Activated T-helper 1 cell treated with anti-CD3 and anti-CD28 coated beads, Interleukin-12 subunit alpha, Interleukin-12 subunit beta, Interleukin-2, Interleukin-4 antibody, amounts not matched to agents 30 ng/mL and 10 ng/mL and 1 ng/mL, durations not matched to agents 14 hours and 24 hours and 36 hours (primary cell): ENCODE measurements at regions of chr19 and their contacts with region 1.

Region 1: GRCh38 chr19:58326914-58327726 is at the start of gene ZSCAN22:
- DNase-seq: peak; percentile 88
- H3K4me3 Mint-ChIP-seq: no peak within 1 kb of the TSS
- H3K27ac Mint-ChIP-seq: no peak within 1 kb of the TSS
- H3K4me1 Mint-ChIP-seq: peaks cover 9% of the 10 kb centered on the region
- H3K27me3 Mint-ChIP-seq: no peaks in the 10 kb centered on the region
- total RNA-seq, gene ZSCAN22: 4.7 and 4.8 TPM in 2 replicates

Region 2: DNA sequence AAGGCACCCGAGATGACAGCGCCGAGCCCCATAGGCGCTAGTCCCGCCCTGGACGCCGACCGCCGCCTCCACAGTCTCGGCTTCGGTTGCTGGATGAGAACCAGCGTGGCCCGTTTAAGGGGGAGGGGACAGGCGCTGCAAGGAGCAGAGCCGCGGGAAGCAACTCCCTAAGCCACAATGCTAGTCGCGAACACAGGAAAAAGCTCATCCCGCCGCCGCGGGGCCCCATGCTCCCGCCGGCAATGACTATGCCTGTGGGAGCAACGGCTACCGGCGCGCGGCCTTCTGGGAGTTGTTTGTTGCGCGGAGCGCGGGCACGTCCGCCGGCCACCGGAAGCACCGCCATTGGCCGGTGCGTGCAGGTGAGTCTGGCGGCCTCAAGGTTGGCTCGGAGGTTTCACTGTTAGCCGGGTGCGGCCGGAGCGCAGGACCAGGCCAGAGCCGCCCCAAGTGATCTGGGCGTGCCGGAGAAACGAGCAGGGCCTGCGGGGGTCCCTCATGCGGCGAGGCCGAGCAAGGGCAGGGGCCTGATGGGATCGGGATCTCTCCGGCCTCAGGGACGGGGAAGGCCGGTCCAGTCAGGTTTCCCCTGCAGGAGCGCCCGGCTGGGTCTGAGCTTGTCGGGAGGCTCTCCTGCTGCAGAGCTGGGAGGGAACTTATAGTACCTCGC is 98.4 kb before region 1 on chr19 and contains the start of gene ZNF544:
- intact Hi-C with region 1: loop called (anchors 5 kb)
- DNase-seq: peak; percentile 60
- H3K4me3 Mint-ChIP-seq: peak within 1 kb of the TSS; percentile 89
- H3K27ac Mint-ChIP-seq: peak within 1 kb of the TSS; percentile 96
- H3K4me1 Mint-ChIP-seq: peaks cover 32% of the 10 kb centered on the region
- H3K27me3 Mint-ChIP-seq: no peaks in the 10 kb centered on the region
- total RNA-seq, gene ZNF544: 51.8 and 56.1 TPM in 2 replicates

Region 3: DNA sequence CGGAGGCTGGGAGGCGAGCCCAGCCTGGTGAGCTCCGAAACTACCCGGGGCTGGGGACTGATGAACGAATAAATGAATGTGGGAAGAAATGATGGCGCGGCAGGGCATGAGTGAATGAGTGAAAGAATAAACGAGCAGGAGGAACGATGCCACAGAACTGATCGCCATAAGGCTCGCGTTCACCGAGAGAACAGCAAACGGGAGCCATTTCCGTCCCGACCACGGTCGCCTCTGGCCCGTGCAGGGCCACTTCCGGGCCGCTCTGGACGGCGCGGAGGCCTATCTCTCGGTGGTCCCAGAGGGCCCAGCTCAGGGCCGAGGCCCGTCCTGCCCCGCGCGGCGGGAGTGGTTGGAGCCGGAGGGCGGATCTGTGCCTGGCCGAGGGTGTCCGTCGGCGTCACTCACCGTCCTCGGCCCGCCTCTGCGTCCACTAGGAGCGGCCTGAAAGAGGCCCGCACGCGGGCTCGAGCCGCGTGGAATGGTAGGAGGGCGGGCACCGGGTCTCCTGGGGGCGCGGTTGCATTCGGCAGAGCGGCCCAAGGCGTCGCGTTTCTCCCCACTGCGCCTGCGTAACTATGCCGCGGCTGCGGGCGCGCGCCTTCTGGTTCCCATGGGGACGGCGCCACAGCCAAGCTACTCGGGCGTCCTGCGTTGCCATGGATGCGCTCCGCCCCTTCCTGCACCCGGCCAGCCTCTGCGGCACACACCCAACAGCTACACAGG is 35.3 kb after region 1 on chr19 and contains the start of gene ZNF497:
- intact Hi-C with region 1: loop called (anchors 1 kb)
- DNase-seq: peak; percentile 95
- H3K4me3 Mint-ChIP-seq: peak within 1 kb of the TSS; percentile 94
- H3K27ac Mint-ChIP-seq: peak within 1 kb of the TSS; percentile 95
- H3K4me1 Mint-ChIP-seq: peaks cover 7% of the 10 kb centered on the region
- H3K27me3 Mint-ChIP-seq: no peaks in the 10 kb centered on the region
- total RNA-seq, gene ZNF497: 0.76 and 0.93 TPM in 2 replicates

Region 4: GRCh38 chr19:58400916-58401839 is 74.1 kb after region 1 on chr19:
- intact Hi-C with region 1: loop called (anchors 1 kb)
- DNase-seq: peak; percentile 99
- H3K4me3 Mint-ChIP-seq: peak overlapping the region; percentile 86
- H3K27ac Mint-ChIP-seq: peak overlapping the region; percentile 88
- H3K4me1 Mint-ChIP-seq: peaks cover 24% of the 10 kb centered on the region
- H3K27me3 Mint-ChIP-seq: peaks cover 5% of the 10 kb centered on the region

Region 5: DNA sequence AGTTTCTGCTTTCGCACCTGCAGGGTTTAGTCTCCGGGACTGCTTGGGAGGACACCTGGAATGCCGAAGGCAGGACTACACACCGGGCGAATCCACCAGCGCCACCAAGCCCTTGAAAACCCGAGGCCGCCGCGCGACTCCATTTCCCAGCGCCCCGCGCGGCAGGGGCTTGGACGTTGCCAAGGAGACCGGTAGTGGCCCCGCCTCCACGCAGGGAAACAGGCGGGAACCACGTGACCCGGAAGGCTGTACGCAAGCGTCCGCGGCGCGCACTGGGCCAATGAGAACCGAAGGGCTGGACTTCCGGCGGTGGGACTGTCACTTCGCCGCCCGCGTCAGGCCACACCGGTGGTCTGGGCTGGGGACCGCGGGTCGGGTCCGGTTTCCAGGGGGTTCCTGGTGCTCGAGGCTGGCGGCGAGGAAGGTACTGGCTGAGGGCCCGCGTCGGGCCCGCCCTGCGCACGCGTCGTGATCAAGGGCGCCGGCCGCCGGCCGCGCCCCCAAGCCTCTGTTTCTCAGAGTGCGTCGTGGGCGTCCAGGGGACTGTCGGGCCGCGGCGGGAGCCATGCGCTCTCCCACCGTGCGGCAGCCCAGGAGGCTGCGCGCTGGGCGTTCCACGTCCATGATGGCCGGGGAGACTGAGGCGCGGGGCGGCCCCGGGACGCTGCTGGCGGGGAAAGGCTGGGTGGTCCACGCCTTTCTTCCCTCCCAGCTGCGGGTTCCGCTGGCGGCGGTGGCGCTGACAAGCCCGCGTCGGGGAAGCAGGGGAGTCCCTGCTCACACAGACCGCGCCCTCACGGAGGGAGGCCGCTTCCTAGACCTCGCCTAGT is 139.9 kb after region 1 on chr19 and contains the start of gene ZNF324:
- intact Hi-C with region 1: loop called (anchors 1 kb)
- DNase-seq: peak; percentile 96
- H3K4me3 Mint-ChIP-seq: peak within 1 kb of the TSS; percentile 88
- H3K27ac Mint-ChIP-seq: peak within 1 kb of the TSS; percentile 71
- H3K4me1 Mint-ChIP-seq: peaks cover 17% of the 10 kb centered on the region
- H3K27me3 Mint-ChIP-seq: no peaks in the 10 kb centered on the region
- total RNA-seq, gene ZNF324: 12.8 and 15.5 TPM in 2 replicates

Region 6: GRCh38 chr19:58519355-58520256 is 192.5 kb after region 1 on chr19 and contains the start of gene ZBTB45:
- intact Hi-C with region 1: loop called (anchors 1 kb)
- DNase-seq: peak; percentile 91
- H3K4me3 Mint-ChIP-seq: peak within 1 kb of the TSS; percentile 99
- H3K27ac Mint-ChIP-seq: peak within 1 kb of the TSS; percentile 99
- H3K4me1 Mint-ChIP-seq: peaks cover 34% of the 10 kb centered on the region
- H3K27me3 Mint-ChIP-seq: peaks cover 3% of the 10 kb centered on the region
- total RNA-seq, gene ZBTB45: 15.9 and 17.4 TPM in 2 replicates